Adrenal gland (tissue), 19 donors: ENCODE measurements at regions of chr15 and their contacts with region 1.

Region 1: GRCh38 chr15:96327155-96327741 is 3.3 kb upstream of the NR2F2 start:
- DNase-seq: peak in 5 of 7 donors; percentile 26 to 56 (median 43)
- H3K4me3 ChIP-seq: peak overlapping the region in 3 of 4 donors; percentile 54 to 82 (median 80)
- H3K27ac ChIP-seq: peak overlapping the region; percentile 33 to 89 (median 78)
- H3K4me1 ChIP-seq: no peaks in the 10 kb centered on the region
- H3K27me3 ChIP-seq: peaks cover 4% of the 10 kb centered on the region
- CTCF ChIP-seq: peak; percentile 67 to 86 (median 82)
- POLR2A ChIP-seq: peak; percentile 18 to 31

Region 2: DNA sequence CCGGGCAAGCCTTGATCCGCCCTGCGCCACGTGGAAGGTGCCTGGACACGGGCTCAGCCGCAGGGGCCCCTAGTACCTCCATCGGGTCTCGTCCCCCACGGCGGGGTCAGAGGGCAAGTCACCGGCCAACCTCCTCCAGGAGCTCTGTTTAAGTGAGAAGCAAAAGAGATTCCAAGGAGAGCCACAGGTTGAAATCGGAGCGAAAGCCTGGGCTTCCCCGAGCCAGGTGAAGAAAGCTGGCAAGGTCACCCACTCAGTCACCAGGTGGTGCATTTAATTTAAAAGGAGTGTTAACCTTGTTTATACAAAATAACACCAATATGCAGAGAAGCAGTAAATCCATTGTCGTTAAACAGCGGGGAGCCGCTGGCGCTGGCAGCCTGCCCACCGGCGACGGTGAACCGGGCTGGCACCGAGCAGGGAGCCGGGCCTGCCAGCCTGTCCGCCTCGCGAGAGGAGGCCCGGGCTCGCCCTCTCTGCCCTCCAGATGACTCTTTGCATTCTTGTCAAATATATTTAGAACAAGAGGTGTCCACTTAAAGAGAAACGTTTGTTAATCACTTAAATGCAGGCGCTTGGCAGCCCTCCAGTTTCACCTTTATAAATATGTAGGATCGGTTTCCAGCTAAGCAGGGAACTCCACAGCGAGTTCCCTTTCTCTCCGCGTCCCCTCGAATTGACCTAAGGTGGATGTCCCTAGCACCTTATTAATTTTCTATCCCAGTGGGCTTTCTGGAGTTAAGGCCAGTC is 274.0 kb before region 1 on chr15:
- intact Hi-C with region 1: no loop called
- DNase-seq: peak in 4 of 7 donors; percentile 9 to 22 (median 18)
- H3K4me3 ChIP-seq: peak overlapping the region in 1 of 4 donors; percentile 44
- H3K27ac ChIP-seq: no peak overlapping the region
- H3K4me1 ChIP-seq: peaks cover 0 to 7% of the 10 kb centered on the region in 2 donors
- H3K27me3 ChIP-seq: peaks cover 6% of the 10 kb centered on the region
- CTCF ChIP-seq: no peak
- POLR2A ChIP-seq: no peak

Region 3: DNA sequence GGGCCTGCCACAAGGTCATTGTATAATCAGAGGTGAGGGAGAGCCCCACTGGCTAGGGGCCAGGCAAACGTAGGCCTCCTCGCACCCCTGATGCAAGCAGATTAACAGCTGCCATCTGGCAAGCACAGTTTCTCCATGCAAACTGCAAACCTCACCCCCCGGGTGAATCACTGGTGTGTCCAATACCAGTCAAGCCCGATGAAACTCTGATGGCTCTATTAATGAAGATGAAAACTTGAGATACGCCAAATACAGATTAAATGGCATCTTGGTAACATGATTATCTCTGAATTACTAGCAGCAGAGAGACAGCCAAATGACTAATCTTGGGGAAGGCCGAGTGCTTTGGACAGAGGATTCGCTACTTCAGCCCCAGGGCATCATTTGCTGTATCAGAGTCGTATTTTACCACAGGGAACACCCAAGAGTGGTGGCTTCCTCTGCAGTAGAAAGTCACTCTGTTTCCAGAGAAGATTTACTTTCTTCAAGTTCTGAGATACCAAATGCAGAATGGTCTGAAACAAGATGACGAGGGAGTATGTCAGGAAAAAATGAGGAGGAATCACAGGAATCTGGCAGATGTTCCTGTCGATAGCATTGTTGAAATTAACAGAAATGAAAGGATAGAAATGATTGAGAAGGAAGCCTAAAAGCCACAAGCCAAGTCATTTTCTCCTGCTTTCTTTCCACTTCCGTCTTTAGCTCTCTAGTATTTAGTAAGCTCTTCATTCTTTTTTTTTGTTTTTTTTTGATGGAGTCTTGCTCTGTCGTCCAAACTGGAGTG is 92.9 kb before region 1 on chr15:
- intact Hi-C with region 1: no loop called
- DNase-seq: peak; percentile 24 to 85 (median 68)
- H3K4me3 ChIP-seq: no peak overlapping the region
- H3K27ac ChIP-seq: no peak overlapping the region
- H3K4me1 ChIP-seq: peaks cover 0 to 19% of the 10 kb centered on the region in 2 donors
- H3K27me3 ChIP-seq: no peaks in the 10 kb centered on the region
- CTCF ChIP-seq: no peak
- POLR2A ChIP-seq: no peak

Region 4: GRCh38 chr15:96574782-96575181 is 247.5 kb after region 1 on chr15:
- intact Hi-C with region 1: no loop called
- DNase-seq: no peak
- H3K4me3 ChIP-seq: no peak overlapping the region
- H3K27ac ChIP-seq: no peak overlapping the region
- H3K4me1 ChIP-seq: no peaks in the 10 kb centered on the region
- H3K27me3 ChIP-seq: no peaks in the 10 kb centered on the region
- CTCF ChIP-seq: no peak
- POLR2A ChIP-seq: no peak

Region 5: GRCh38 chr15:97234851-97235610 is 907.8 kb after region 1 on chr15:
- intact Hi-C with region 1: loop called in 1 of 2 experiments (anchors 10 kb)
- DNase-seq: peak; percentile 46 to 80 (median 58)
- H3K4me3 ChIP-seq: peak overlapping the region in 1 of 4 donors; percentile 27
- H3K27ac ChIP-seq: no peak overlapping the region
- H3K4me1 ChIP-seq: no peaks in the 10 kb centered on the region
- H3K27me3 ChIP-seq: no peaks in the 10 kb centered on the region
- CTCF ChIP-seq: peak; percentile 73 to 94 (median 88)
- POLR2A ChIP-seq: no peak